ENCODE measurements at regions of chr16 and their contacts with region 1.

Region 1: DNA sequence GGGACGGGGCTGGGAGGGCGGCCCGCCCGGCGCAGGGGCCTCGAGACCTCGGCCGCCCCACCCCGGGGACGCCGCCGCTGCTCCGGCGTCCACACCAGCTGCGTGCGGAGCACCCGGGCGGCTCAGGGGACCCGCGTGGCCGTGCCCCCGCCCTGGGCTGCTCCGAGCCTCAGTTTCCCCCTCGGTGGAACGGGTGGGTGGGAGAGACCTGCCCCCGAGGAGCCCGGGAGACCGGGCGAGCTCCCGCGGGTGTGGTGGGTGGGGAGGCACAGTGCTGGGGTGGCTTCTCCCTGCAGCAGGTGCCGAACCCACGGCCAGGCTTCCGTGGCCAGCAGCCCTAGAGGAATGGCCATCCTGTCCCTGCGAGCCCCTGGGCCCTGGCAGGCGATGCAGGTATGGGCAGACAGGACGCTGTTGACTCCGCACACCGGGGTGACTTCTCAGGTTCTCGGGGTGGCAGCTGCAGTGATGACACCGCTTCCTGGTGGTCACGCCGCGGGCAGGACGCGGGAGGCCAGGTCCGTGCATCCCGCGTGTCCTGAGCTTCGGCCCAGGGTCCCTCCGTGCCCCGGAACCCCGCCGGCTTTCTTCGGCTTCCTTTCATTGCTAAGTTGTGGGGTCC is 677 bp downstream of the DEF8 start:
- DNase-seq: no peak
- ATAC-seq: no peak
- H3K4me3 ChIP-seq: peak overlapping the region; percentile 68
- H3K27ac ChIP-seq: no peak overlapping the region
- H3K4me1 ChIP-seq: peaks cover 3% of the 10 kb centered on the region
- H3K27me3 ChIP-seq: peaks cover 0 to 4% (median 0%) of the 10 kb centered on the region in 3 donors
- CTCF ChIP-seq: no peak

Region 2: DNA sequence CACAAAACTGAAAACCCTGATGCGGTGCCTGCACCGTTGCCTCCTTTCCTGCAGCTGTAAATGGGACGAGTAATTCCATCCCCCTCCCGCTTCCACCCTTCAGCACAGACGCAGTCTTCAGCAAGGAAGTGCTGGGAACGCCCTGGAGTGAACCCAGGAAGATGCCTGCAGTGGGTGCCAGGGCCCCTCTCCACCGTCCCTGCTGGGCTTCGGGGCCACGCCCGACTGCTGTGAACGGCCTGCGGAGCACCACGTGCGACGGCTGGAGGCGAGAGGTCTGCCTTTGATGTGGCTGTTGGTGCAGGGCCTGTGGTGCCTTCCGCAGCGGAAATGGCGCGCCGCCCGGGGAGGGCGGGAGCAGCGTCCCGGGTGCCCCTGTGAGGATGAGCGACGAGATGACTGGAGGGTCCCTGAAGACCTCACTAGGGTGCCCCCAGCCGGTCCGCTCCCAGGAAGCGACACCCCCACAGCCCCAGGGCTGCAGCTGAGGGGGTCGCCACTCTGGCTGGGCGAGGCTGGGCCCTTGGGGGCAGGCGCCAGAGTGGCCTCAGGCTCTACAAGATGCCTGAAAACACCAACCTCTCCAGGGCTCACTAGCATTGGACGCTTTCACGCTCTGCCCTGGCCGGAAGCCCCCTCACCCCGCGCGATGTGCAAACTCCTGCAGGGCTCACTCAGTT is 31.3 kb before region 1 on chr16:
- intact Hi-C with region 1: no loop called
- DNase-seq: peak; percentile 82 to 85
- ATAC-seq: peak; percentile 34 to 54 (median 45)
- H3K4me3 ChIP-seq: peak overlapping the region; percentile 50
- H3K27ac ChIP-seq: no peak overlapping the region
- H3K4me1 ChIP-seq: peaks cover 15% of the 10 kb centered on the region
- H3K27me3 ChIP-seq: peaks cover 0 to 47% (median 30%) of the 10 kb centered on the region in 3 donors
- CTCF ChIP-seq: no peak

Region 3: DNA sequence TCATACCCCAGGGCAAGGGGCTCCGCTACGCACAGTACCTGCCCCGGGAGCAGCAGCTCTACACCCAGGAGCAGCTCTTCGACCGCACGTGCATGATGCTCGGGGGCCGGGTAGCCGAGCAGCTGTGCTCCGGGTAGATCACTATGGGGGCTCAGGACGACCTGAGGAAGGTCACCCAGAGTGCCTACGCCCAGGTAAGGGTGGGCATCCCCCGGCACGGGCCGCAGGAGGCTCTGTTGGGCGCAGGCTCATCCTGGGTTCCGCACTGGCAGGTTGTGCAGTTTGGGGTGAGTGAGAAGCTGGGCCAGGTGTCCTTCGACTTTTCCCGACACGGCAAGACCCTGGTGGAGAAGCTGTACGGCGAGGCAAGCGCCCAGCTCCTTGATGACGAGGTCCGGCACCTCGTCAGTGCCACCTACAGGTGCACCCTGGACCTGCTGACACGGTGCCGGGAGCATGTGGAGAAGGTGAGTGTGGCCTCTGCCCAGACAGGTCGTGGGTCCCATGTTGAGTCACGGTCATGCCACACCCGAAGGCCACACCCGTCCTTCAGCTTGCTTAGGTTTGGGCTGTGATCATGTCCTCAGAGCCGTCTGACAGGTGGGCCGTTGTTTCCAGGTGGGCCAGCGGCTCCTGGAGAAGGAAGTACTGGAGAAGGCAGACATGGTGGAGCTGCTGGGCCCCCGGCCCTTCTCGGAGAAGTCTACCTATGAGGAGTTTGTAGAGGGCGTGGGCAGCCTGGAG is 50.8 kb after region 1 on chr16:
- intact Hi-C with region 1: no loop called
- DNase-seq: peak in 1 of 2 donors; percentile 39
- ATAC-seq: no peak
- H3K4me3 ChIP-seq: no peak overlapping the region
- H3K27ac ChIP-seq: no peak overlapping the region
- H3K4me1 ChIP-seq: no peaks in the 10 kb centered on the region
- H3K27me3 ChIP-seq: no peaks in the 10 kb centered on the region
- CTCF ChIP-seq: no peak

Region 4: GRCh38 chr16:90019543-90020259 is 70.5 kb after region 1 on chr16:
- intact Hi-C with region 1: loop called in 1 of 2 experiments (anchors 2 kb)
- DNase-seq: peak; percentile 45 to 69
- ATAC-seq: peak; percentile 30 to 56 (median 44)
- H3K4me3 ChIP-seq: peak overlapping the region; percentile 81
- H3K27ac ChIP-seq: peak overlapping the region; percentile 59
- H3K4me1 ChIP-seq: peaks cover 44% of the 10 kb centered on the region
- H3K27me3 ChIP-seq: no peaks in the 10 kb centered on the region
- CTCF ChIP-seq: peak; percentile 28

Measured in psoas muscle (tissue), 8 donors.